A549 (cell line): ENCODE measurements at regions of chr9 and their contacts with region 1.

Region 1: GRCh38 chr9:27333241-27334052 is 36.5 kb upstream of the EQTN start:
- DNase-seq: peak; percentile 59 to 71
- ATAC-seq: peak; percentile 58 to 84
- H3K4me3 ChIP-seq: no peak overlapping the region
- H3K27ac ChIP-seq: peak overlapping the region; percentile 53; a peak in 4 of 6 replicates
- H3K4me1 ChIP-seq: peaks cover 6% of the 10 kb centered on the region; the same call in 2 of the 3 replicates
- CTCF ChIP-seq: peak; percentile 89
- EP300 ChIP-seq: no peak
- POLR2A ChIP-seq: no peak
- RAD21 ChIP-seq: peak; percentile 90 to 97

Region 2: GRCh38 chr9:27310582-27310981 is 22.9 kb before region 1 on chr9:
- CTCF ChIA-PET with region 1: interaction called, 12 read pairs
- POLR2A ChIA-PET with region 1: no interaction called
- DNase-seq: no peak
- ATAC-seq: no peak
- H3K4me3 ChIP-seq: no peak overlapping the region
- H3K27ac ChIP-seq: no peak overlapping the region
- H3K4me1 ChIP-seq: no peaks in the 10 kb centered on the region
- CTCF ChIP-seq: no peak
- EP300 ChIP-seq: no peak
- POLR2A ChIP-seq: no peak
- RAD21 ChIP-seq: no peak

Region 3: DNA sequence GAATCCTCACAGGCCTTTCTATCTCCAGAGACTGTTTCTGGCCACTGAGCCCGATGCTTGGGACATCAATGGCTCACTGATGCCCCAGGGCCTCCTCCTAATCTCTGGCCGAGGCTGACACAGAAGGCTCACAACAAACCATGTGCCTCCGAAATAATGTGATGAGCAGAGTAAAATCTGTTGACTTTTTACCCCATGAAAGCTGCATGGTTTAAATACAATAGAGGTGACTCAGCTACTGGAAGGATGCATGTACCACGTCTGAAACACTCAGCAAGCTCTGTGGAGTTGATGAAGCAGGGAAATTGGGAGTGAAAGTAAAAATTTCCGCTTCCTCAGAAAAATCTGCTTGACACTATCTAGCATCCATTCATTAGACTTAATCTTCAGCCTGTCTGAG is 74.5 kb after region 1 on chr9:
- CTCF ChIA-PET with region 1: interaction called, 14 read pairs
- POLR2A ChIA-PET with region 1: no interaction called
- DNase-seq: peak in 1 of 2 experiments; percentile 50
- ATAC-seq: peak; percentile 82 to 87
- H3K4me3 ChIP-seq: no peak overlapping the region
- H3K27ac ChIP-seq: peak overlapping the region; percentile 60 to 81
- H3K4me1 ChIP-seq: peaks cover 26% of the 10 kb centered on the region
- CTCF ChIP-seq: no peak
- EP300 ChIP-seq: no peak
- POLR2A ChIP-seq: no peak
- RAD21 ChIP-seq: no peak

Region 4: GRCh38 chr9:27519466-27520465 is 186.3 kb after region 1 on chr9:
- CTCF ChIA-PET with region 1: interaction called, 10 read pairs
- POLR2A ChIA-PET with region 1: no interaction called
- DNase-seq: peak in 1 of 2 experiments; percentile 49
- ATAC-seq: peak; percentile 84 to 88
- H3K4me3 ChIP-seq: no peak overlapping the region
- H3K27ac ChIP-seq: peak overlapping the region; percentile 68 to 83
- H3K4me1 ChIP-seq: peaks cover 30% of the 10 kb centered on the region
- CTCF ChIP-seq: no peak
- EP300 ChIP-seq: no peak
- POLR2A ChIP-seq: no peak
- RAD21 ChIP-seq: no peak